ENCODE measurements at regions of chr5 and their contacts with region 1.

Region 1: GRCh38 chr5:180860887-180861822 is at the start of gene ZFP62:
- DNase-seq: peak; percentile 92
- ATAC-seq: peak; percentile 82
- H3K4me3 Mint-ChIP-seq: peak within 1 kb of the TSS; percentile 94
- H3K27ac Mint-ChIP-seq: peak within 1 kb of the TSS; percentile 94
- H3K4me1 Mint-ChIP-seq: peaks cover 18% of the 10 kb centered on the region
- H3K27me3 Mint-ChIP-seq: no peaks in the 10 kb centered on the region
- CTCF ChIP-seq: no peak
- total RNA-seq, gene ZFP62: 43.7 and 45.6 TPM in 2 replicates

Region 2: GRCh38 chr5:180784497-180785097 is 76.6 kb before region 1 on chr5:
- CTCF ChIA-PET with region 1: interaction called, 7 read pairs
- POLR2A ChIA-PET with region 1: interaction called, 12 read pairs
- intact Hi-C with region 1: loop called (anchors 1 kb)
- DNase-seq: peak; percentile 58
- ATAC-seq: peak; percentile 89
- H3K4me3 Mint-ChIP-seq: no peak overlapping the region
- H3K27ac Mint-ChIP-seq: no peak overlapping the region
- H3K4me1 Mint-ChIP-seq: no peaks in the 10 kb centered on the region
- H3K27me3 Mint-ChIP-seq: no peaks in the 10 kb centered on the region
- CTCF ChIP-seq: peak; percentile 36

Region 3: GRCh38 chr5:180831139-180832048 is 29.8 kb before region 1 on chr5:
- CTCF ChIA-PET with region 1: no interaction called
- POLR2A ChIA-PET with region 1: interaction called, 118 read pairs
- intact Hi-C with region 1: loop called (anchors 1 kb)
- DNase-seq: peak; percentile 82
- ATAC-seq: peak; percentile 83
- H3K4me3 Mint-ChIP-seq: peak overlapping the region; percentile 98
- H3K27ac Mint-ChIP-seq: peak overlapping the region; percentile 98
- H3K4me1 Mint-ChIP-seq: peaks cover 54% of the 10 kb centered on the region
- H3K27me3 Mint-ChIP-seq: no peaks in the 10 kb centered on the region
- CTCF ChIP-seq: no peak

Region 4: DNA sequence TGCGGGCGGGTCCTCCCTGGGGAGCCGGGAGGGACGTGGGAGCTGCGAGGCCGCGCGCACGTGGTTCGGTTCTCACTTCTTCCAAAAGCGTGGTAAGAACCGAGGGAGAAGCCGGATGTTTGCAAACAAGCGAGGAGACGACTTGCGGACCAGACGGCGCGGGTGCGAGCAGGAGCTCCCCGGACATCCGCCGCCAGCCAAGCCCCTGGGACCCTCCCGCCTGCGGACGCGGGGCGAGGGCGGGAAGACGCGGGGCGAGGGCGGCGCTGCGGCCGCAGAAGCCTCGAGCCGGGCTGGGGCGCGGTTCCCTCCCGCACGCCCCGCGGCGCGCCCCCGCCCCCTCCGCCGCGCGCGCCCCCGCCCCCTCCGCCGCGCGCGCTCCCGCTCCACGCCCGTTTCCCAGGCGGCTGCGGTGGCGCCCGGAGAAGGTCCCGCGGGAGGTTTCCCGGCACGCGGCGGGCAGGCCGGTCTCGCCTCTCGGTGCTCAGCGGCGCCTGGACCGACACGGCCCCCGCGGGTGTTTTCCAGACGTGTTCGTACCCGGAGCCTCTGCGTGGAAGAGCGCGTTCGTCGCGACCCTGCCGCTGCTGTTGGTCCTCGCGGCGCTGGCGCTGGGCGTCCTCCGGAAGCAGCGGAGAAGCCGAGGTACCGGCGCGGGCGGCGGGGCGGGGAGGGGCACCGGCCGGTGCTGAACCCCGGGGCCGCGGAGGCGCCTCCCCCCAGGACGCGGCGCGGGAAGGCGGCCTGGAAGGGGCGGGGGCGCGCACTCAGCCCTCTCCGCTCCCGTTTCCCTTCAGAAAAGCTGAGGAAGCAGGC is 191.7 kb after region 1 on chr5:
- CTCF ChIA-PET with region 1: no interaction called
- POLR2A ChIA-PET with region 1: interaction called, 8 read pairs
- intact Hi-C with region 1: loop called (anchors 1 kb)
- DNase-seq: peak; percentile 42
- ATAC-seq: peak; percentile 35
- H3K4me3 Mint-ChIP-seq: peak overlapping the region; percentile 85
- H3K27ac Mint-ChIP-seq: peak overlapping the region; percentile 70
- H3K4me1 Mint-ChIP-seq: peaks cover 46% of the 10 kb centered on the region
- H3K27me3 Mint-ChIP-seq: peaks cover 52% of the 10 kb centered on the region
- CTCF ChIP-seq: no peak

Region 5: GRCh38 chr5:181207214-181208107 is 346.3 kb after region 1 on chr5:
- CTCF ChIA-PET with region 1: no interaction called
- POLR2A ChIA-PET with region 1: interaction called, 12 read pairs
- intact Hi-C with region 1: no loop called
- DNase-seq: peak; percentile 56
- ATAC-seq: peak; percentile 62
- H3K4me3 Mint-ChIP-seq: peak overlapping the region; percentile 92
- H3K27ac Mint-ChIP-seq: peak overlapping the region; percentile 97
- H3K4me1 Mint-ChIP-seq: peaks cover 34% of the 10 kb centered on the region
- H3K27me3 Mint-ChIP-seq: peaks cover 15% of the 10 kb centered on the region
- CTCF ChIP-seq: no peak

Region 6: DNA sequence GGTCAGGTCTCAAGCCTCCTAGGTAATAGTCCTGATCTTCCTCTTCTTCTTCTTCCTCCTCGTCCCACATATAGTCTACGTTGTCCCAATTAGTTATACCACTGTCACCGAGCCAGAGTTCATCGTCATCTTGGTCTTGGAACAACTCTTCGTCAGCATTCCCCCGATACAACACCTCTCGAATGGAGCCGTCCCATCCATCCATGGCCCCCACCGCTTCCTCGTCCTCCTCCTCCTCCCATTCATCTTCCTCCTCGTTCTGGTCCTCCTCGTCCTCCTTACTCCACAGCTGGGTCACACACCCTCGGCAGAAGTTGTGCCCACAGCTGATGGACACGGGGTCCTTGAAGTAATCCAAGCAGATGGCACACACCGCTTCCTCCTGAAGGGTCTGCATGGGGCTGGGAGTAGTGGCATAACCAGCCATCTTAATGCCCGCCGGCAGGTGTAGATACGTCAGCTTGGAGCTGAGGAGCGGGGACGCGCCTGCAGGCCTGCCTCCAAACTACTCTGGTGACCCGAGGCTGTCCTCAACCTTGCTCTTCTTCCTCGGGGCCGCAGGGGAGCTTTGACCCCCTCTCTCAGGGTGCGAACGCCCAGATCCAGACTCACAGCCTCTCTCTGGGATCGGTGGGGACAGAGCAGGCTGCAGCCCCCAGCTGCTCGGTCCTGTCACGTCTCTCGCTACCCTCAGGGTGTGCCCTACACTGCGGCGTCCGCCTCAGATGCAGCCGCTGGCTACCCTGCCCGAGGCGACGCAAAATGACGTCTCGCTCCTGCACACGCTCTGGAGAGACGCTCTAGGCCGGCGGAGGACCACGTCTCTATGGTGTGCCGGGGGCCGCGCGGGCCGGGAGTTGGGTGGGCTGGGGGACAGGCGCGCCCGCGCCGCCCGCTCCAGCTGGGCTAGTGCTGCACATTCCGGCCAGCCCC is 399.5 kb after region 1 on chr5 and contains the start of gene TRIM52:
- CTCF ChIA-PET with region 1: no interaction called
- POLR2A ChIA-PET with region 1: interaction called, 8 read pairs
- intact Hi-C with region 1: loop called (anchors 1 kb)
- DNase-seq: peak; percentile 86
- ATAC-seq: peak; percentile 80
- H3K4me3 Mint-ChIP-seq: peak within 1 kb of the TSS; percentile 98
- H3K27ac Mint-ChIP-seq: peak within 1 kb of the TSS; percentile 96
- H3K4me1 Mint-ChIP-seq: peaks cover 49% of the 10 kb centered on the region
- H3K27me3 Mint-ChIP-seq: no peaks in the 10 kb centered on the region
- CTCF ChIP-seq: no peak
- total RNA-seq, gene TRIM52: 30.9 and 36.9 TPM in 2 replicates